Activated naive CD4-positive, alpha-beta T cell treated with anti-CD3 and anti-CD28 coated beads for 36 hours (primary cell): ENCODE measurements at regions of chr7 and their contacts with region 1.

Region 1: GRCh38 chr7:121395961-121396757 is at the start of gene FAM3C:
- DNase-seq: peak; percentile 85
- H3K4me3 Mint-ChIP-seq: peak within 1 kb of the TSS; percentile 82
- H3K27ac Mint-ChIP-seq: peak within 1 kb of the TSS; percentile 88
- H3K4me1 Mint-ChIP-seq: peaks cover 33% of the 10 kb centered on the region
- H3K27me3 Mint-ChIP-seq: no peaks in the 10 kb centered on the region
- total RNA-seq, gene FAM3C: 11.5 to 13.9 TPM

Region 2: DNA sequence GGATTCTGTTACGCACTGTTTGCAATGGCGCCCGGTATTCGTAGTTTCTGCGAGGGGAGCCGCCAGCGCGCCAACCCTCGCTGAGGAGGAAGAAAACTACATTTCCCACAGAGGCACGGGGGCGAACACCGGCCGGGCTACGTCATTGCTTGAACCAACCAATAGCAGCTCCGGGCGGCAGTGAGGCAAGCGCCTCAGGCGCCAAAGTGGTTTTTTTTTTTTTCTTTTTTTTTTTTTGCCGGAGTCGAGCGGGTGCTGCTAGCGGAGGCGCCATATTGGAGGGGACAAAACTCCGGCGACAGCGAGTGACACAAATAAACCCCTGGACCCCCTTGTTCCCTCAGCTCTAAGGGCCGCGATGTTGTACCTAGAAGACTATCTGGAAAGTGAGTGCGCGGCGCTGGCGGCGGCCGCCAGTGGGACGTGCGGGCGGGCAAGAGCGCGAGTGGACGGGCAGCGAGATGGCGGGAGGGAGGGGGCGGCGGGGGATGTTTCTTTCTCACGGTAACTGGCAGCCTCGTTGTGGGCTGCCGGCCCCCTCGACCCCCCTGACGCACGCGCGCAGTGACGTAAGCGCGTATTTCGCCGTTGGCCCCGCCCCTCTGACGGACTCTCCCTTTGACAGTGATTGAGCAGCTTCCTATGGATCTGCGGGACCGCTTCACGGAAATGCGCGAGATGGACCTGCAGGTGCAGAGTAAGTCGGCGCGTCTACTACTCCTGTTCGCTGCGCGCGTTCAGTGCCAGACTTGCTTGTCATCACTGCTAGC is 445.4 kb before region 1 on chr7 and contains the start of gene ING3:
- CTCF ChIA-PET with region 1: no interaction called
- intact Hi-C with region 1: loop called (anchors 1 kb)
- DNase-seq: peak; percentile 97
- H3K4me3 Mint-ChIP-seq: peak within 1 kb of the TSS; percentile 97
- H3K27ac Mint-ChIP-seq: peak within 1 kb of the TSS; percentile 97
- H3K4me1 Mint-ChIP-seq: peaks cover 17% of the 10 kb centered on the region
- H3K27me3 Mint-ChIP-seq: peaks cover 3% of the 10 kb centered on the region
- total RNA-seq, gene ING3: 25.0 to 26.7 TPM

Region 3: DNA sequence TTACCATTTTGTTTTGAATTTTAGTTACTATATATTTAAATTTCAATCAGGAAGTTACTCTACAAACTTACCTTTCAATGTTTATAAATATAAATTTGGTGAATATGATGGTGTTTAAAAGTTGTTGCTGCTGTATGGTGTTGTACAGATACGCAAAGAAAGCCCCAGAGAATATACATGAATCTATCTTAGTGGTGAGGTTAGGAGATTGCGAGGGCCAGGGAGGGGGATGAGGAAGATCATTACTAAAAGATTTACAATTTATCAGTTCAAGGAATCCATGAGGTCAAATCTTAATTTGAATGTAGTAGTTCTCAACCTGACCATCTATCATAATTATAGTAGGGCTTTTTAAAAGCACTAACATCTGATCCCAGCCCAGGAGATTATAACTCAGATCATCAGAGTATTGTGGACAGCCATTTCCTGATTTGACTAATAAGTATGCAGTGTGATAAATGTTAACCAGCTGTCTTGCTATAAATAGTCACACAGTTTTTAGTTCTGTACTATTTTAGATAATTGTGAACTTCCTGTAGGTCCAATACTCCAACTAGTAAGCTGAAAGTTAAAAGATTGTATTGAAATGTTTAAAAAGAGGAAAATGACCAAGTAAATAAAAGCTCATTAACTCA is 23.7 kb before region 1 on chr7:
- CTCF ChIA-PET with region 1: interaction called, 29 read pairs
- intact Hi-C with region 1: loop called (anchors 1 kb)
- DNase-seq: no peak
- H3K4me3 Mint-ChIP-seq: no peak overlapping the region
- H3K27ac Mint-ChIP-seq: peak overlapping the region; percentile 41
- H3K4me1 Mint-ChIP-seq: peaks cover 28% of the 10 kb centered on the region
- H3K27me3 Mint-ChIP-seq: no peaks in the 10 kb centered on the region

Region 4: GRCh38 chr7:121385800-121386179 is 10.4 kb before region 1 on chr7:
- CTCF ChIA-PET with region 1: interaction called, 42 read pairs
- intact Hi-C with region 1: loop called (anchors 1 kb)
- DNase-seq: no peak
- H3K4me3 Mint-ChIP-seq: no peak overlapping the region
- H3K27ac Mint-ChIP-seq: no peak overlapping the region
- H3K4me1 Mint-ChIP-seq: peaks cover 67% of the 10 kb centered on the region
- H3K27me3 Mint-ChIP-seq: no peaks in the 10 kb centered on the region

Region 5: GRCh38 chr7:122143751-122144711 is 747.9 kb after region 1 on chr7 and contains the start of gene AASS:
- CTCF ChIA-PET with region 1: no interaction called
- intact Hi-C with region 1: loop called (anchors 10 kb)
- DNase-seq: peak; percentile 83
- H3K4me3 Mint-ChIP-seq: peak within 1 kb of the TSS; percentile 88
- H3K27ac Mint-ChIP-seq: peak within 1 kb of the TSS; percentile 60
- H3K4me1 Mint-ChIP-seq: peaks cover 19% of the 10 kb centered on the region
- H3K27me3 Mint-ChIP-seq: peaks cover 38% of the 10 kb centered on the region
- total RNA-seq, gene AASS: 1.9 to 2.2 TPM

Region 6: DNA sequence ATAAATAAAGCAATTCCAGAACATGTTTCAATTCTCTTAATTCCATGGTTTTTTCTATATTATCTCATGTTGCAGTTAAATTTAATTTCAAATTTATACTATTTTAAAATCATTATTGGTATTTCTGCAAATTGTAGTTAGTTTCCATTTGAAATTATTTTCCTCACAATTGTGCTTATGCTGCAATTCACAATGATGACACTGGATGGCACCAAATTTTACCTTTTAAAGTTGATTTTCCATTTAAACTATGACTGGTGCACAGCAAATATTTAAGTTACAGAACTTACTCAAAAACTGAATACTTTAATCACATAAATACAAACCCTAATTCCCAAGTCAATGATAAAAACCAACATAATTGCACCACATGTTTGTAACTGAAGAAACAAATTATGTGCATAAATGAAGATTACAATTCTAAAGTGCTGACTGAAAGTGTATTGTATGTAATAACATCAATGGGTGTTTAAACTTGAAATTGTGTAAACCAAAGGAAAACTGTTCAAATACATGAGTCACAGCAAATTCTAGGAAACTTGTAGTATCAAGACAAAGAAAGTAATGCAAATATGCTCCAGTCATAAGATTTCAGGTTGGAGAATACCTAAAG is 823.2 kb after region 1 on chr7:
- CTCF ChIA-PET with region 1: no interaction called
- intact Hi-C with region 1: no loop called
- DNase-seq: no peak
- H3K4me3 Mint-ChIP-seq: no peak overlapping the region
- H3K27ac Mint-ChIP-seq: no peak overlapping the region
- H3K4me1 Mint-ChIP-seq: no peaks in the 10 kb centered on the region
- H3K27me3 Mint-ChIP-seq: no peaks in the 10 kb centered on the region